B cell (primary cell): ENCODE measurements at regions of chr1 and their contacts with region 1.

Region 1: DNA sequence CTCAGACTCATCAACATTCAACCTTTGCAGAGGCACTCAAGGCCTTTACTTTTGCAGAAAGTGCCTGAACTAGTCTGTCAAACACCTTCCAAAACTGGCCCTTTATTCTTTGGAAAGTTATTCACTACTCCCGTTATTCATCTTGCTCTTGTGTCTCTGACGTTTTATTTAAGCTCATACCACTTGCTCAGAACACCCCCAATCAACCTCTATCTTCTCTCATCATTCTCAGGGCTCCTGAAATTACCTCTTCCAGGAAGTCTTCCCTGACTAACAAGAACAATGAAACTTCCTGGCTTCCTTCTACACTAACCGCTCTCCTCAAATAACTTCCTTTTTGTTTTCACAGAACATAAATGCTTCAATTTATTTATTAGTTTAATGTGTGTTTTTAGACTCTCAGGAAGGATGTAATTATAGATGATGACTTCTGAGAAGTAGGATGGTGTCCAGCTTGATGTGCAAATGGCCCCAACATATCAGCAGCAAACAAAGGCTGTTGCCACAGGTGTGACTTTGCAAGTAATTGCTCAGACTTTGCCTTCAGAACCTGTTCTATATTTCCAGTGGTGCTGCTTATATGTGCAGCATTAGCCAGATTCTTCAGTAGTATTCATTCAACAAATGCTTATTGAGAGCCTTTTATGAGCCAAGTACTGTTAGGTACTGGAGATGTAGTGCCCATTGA is 22.8 kb upstream of the BATF3 start:
- DNase-seq: no peak
- ATAC-seq: no peak
- H3K4me3 ChIP-seq: no peak overlapping the region
- H3K4me3 Mint-ChIP-seq: no peak overlapping the region
- H3K27ac ChIP-seq: no peak overlapping the region
- H3K27ac Mint-ChIP-seq: no peak overlapping the region
- H3K4me1 ChIP-seq: no peaks in the 10 kb centered on the region
- H3K4me1 Mint-ChIP-seq: no peaks in the 10 kb centered on the region
- H3K27me3 ChIP-seq: no peaks in the 10 kb centered on the region
- H3K27me3 Mint-ChIP-seq: peaks cover 6% of the 10 kb centered on the region
- CTCF ChIP-seq: no peak

Region 2: GRCh38 chr1:212621951-212622305 is 100.5 kb before region 1 on chr1:
- CTCF ChIA-PET with region 1: no interaction called
- POLR2A ChIA-PET with region 1: no interaction called
- intact Hi-C with region 1: no loop called
- DNase-seq: no peak
- ATAC-seq: no peak
- H3K4me3 ChIP-seq: no peak overlapping the region
- H3K4me3 Mint-ChIP-seq: no peak overlapping the region
- H3K27ac ChIP-seq: no peak overlapping the region
- H3K27ac Mint-ChIP-seq: no peak overlapping the region
- H3K4me1 ChIP-seq: no peaks in the 10 kb centered on the region
- H3K4me1 Mint-ChIP-seq: no peaks in the 10 kb centered on the region
- H3K27me3 ChIP-seq: peaks cover 0 to 9% (median 0%) of the 10 kb centered on the region in 4 experiments
- H3K27me3 Mint-ChIP-seq: peaks cover 19% of the 10 kb centered on the region
- CTCF ChIP-seq: no peak

Region 3: DNA sequence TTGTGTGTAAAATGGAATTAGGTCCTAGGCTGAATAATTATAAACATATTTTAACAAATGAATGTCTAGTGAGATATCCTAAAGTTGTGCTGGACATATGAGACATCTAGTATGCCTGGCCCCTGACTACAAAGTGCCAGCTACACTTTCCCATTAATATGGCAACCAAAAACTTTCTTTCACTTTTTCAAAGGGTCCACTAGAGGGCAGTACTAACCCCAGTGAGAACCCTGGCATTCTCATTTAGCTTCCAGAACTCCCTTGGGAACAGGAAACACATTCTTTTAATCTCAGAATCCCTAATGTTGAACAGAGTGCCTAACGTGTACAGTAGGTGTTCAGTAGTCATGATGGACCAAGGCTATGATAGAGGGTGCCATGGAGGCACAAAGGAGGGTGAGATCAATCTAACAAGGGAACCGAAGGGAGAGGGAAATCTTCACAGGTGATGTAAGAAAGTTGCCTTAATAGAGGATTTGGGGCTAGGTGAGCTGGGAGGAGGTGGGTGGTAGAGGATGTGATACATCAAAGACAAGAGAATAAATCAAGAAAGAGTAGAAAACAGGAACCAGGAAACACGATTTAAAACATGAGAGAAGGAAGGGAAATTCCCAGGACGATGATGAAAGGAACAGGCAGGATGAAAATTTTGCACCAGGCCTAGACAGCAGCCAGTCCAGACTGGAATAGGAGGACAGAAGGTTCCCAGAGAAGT is 27.6 kb after region 1 on chr1:
- CTCF ChIA-PET with region 1: interaction called, 3 read pairs
- POLR2A ChIA-PET with region 1: interaction called, 10 read pairs
- intact Hi-C with region 1: no loop called
- DNase-seq: peak; percentile 42
- ATAC-seq: peak; percentile 34
- H3K4me3 ChIP-seq: no peak overlapping the region
- H3K4me3 Mint-ChIP-seq: peak overlapping the region; percentile 0
- H3K27ac ChIP-seq: peak overlapping the region in 1 of 2 donors; percentile 80
- H3K27ac Mint-ChIP-seq: peak overlapping the region; percentile 15
- H3K4me1 ChIP-seq: peaks cover 34 to 39% of the 10 kb centered on the region in 2 donors
- H3K4me1 Mint-ChIP-seq: peaks cover 37% of the 10 kb centered on the region
- H3K27me3 ChIP-seq: no peaks in the 10 kb centered on the region
- H3K27me3 Mint-ChIP-seq: no peaks in the 10 kb centered on the region
- CTCF ChIP-seq: peak; percentile 62